Activated CD4-positive, alpha-beta T cell treated with anti-CD3 and anti-CD28 coated beads, Interleukin-2, amount 10 ng/mL, durations not matched to agents 24 days and 14 days (primary cell): ENCODE measurements at regions of chr13 and their contacts with region 1.

Region 1: GRCh38 chr13:107211073-107211472 is 643.1 kb upstream of the ARGLU1 start:
- DNase-seq: peak; percentile 84
- H3K4me3 Mint-ChIP-seq: no peak overlapping the region
- H3K27ac Mint-ChIP-seq: no peak overlapping the region
- H3K4me1 Mint-ChIP-seq: no peaks in the 10 kb centered on the region
- H3K27me3 Mint-ChIP-seq: no peaks in the 10 kb centered on the region

Region 2: GRCh38 chr13:106528718-106529414 is 682.2 kb before region 1 on chr13:
- intact Hi-C with region 1: loop called (anchors 5 kb)
- DNase-seq: no peak
- H3K4me3 Mint-ChIP-seq: no peak overlapping the region
- H3K27ac Mint-ChIP-seq: no peak overlapping the region
- H3K4me1 Mint-ChIP-seq: peaks cover 12% of the 10 kb centered on the region
- H3K27me3 Mint-ChIP-seq: peaks cover 69% of the 10 kb centered on the region

Region 3: DNA sequence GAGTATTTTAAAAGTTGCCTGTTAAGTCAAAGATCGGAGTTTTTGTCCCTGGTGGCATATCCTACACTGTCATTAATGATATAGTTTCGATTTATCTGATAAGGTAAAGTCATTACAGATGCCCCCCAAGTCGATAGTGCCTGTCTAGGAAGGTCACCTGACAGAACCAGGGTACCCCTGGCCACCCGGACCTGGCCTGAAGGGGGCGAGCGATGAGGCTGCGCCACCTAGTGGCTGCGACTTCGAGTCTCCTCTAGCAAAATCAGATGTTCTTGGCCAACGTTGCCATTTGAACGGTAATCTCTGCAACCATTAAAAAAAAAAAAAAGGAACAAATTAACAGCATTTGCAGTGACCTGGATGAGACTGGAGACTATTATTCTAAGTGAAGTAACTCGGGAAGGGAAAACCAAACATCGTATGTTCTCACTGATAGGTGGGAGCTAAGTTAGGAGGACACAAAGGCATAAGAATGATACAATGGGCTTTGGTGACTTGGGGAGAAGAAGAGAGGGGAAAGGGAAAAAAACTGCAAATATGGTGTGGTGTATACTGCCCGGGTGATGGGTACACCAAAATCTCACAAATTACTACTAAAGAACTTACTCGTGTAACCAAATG is 439.1 kb after region 1 on chr13:
- intact Hi-C with region 1: loop called (anchors 2 kb)
- DNase-seq: peak; percentile 75
- H3K4me3 Mint-ChIP-seq: no peak overlapping the region
- H3K27ac Mint-ChIP-seq: no peak overlapping the region
- H3K4me1 Mint-ChIP-seq: no peaks in the 10 kb centered on the region
- H3K27me3 Mint-ChIP-seq: no peaks in the 10 kb centered on the region

Region 4: DNA sequence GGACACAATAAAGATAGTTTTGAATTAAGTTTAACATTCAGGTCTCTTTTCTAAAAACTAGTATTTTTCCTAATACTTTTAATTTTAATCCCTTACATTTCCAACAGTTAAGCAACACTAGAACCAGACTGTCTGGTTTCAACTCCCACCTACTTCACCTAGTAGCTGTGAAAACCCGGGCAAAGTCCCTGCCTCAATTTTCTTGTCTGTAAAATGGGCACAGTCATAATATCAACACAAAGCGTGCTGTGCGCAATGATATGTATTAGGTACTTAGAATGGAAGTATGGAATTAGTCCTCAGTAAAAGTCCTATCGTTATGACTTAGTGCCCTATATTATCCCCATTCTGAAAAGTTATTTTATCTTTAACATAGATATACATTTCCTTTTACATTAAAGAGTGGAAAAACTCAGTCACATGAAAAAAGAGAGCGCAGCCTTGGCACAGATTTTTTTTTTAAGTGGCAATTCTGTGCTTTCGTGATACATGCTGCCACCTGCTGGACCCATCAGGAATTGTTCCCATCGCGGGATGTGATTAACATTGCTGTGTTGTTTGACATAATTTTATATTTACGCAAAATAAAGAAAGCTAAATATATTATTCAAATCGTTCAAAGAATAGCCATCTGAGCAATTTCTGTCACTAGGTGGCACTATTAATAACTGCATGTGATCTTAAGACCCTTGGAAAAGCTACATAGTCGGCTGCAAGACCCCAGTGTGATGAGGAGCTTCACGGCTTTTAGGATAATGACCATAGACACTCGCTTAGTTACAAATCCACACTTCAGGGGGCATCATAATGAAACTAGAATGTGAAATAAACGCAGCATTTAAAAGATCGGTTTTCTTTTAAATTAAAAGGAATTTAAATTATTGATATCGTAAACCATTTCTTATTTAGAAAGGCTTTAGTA is 944.4 kb after region 1 on chr13:
- intact Hi-C with region 1: loop called (anchors 1 kb)
- DNase-seq: peak; percentile 83
- H3K4me3 Mint-ChIP-seq: no peak overlapping the region
- H3K27ac Mint-ChIP-seq: no peak overlapping the region
- H3K4me1 Mint-ChIP-seq: no peaks in the 10 kb centered on the region
- H3K27me3 Mint-ChIP-seq: no peaks in the 10 kb centered on the region